ENCODE measurements at regions of chr5 and their contacts with region 1.

Region 1: DNA sequence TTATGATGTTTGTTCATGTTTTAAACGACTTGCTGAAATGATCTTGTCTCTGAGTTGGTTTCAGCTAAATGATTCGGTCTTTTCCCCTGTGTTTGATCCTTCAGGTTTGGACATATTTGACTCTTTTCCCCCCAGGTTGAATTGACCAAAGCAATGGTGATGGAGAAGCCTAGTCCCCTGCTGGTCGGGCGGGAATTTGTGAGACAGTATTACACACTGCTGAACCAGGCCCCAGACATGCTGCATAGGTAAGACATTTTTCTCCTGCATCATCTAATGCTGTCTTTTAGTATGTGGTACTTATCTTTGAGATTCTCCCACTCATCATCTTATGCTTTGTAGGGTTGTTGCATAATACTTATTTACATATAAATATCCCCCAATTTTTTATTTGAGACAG is 14.7 kb downstream of the G3BP1 start:
- DNase-seq: no peak
- H3K4me3 ChIP-seq: no peak overlapping the region
- H3K27ac ChIP-seq: no peak overlapping the region
- H3K4me1 ChIP-seq: peaks cover 24% of the 10 kb centered on the region
- CTCF ChIP-seq: no peak

Region 2: DNA sequence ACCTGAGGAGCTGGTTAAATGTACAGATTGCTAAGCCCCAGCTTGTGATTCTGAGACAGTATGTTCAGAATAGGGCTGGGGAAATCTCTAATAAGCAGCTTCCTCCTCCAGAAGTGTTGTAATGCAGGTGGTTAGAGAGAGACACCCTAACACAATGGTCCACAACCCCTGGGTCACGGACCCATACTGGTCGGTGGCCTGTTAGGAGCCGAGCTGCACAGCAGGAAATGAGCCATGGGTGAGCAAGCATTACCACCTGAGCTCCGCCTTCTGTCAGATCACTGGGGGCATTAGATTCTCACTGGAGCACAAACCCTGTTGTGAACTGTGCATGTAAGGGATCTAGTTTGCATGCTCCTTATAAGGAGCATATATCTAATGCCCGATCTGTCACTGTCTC is 277.2 kb before region 1 on chr5:
- CTCF ChIA-PET with region 1: no interaction called
- POLR2A ChIA-PET with region 1: no interaction called
- intact Hi-C with region 1: no loop called
- DNase-seq: no peak
- H3K4me3 ChIP-seq: no peak overlapping the region
- H3K27ac ChIP-seq: no peak overlapping the region
- H3K4me1 ChIP-seq: no peaks in the 10 kb centered on the region
- CTCF ChIP-seq: no peak

Region 3: GRCh38 chr5:151771259-151772028 is 15.0 kb before region 1 on chr5 and contains the start of gene G3BP1:
- CTCF ChIA-PET with region 1: interaction called, 4 read pairs
- POLR2A ChIA-PET with region 1: interaction called, 11 read pairs
- intact Hi-C with region 1: no loop called
- DNase-seq: peak; percentile 100
- H3K4me3 ChIP-seq: peak within 1 kb of the TSS; percentile 91
- H3K27ac ChIP-seq: peak within 1 kb of the TSS; percentile 87
- H3K4me1 ChIP-seq: peaks cover 37% of the 10 kb centered on the region
- CTCF ChIP-seq: no peak; the same call in 1 of the 2 replicates
- total RNA-seq, gene G3BP1: 163 and 178 TPM in 2 replicates

Region 4: GRCh38 chr5:151799407-151799806 is 12.9 kb after region 1 on chr5:
- CTCF ChIA-PET with region 1: no interaction called
- POLR2A ChIA-PET with region 1: interaction called, 10 read pairs
- intact Hi-C with region 1: no loop called
- DNase-seq: no peak
- H3K4me3 ChIP-seq: no peak overlapping the region
- H3K27ac ChIP-seq: no peak overlapping the region
- H3K4me1 ChIP-seq: no peaks in the 10 kb centered on the region
- CTCF ChIP-seq: no peak

Measured in OCI-LY7 (cell line).